ENCODE measurements at regions of chr18 and their contacts with region 1.

Region 1: DNA sequence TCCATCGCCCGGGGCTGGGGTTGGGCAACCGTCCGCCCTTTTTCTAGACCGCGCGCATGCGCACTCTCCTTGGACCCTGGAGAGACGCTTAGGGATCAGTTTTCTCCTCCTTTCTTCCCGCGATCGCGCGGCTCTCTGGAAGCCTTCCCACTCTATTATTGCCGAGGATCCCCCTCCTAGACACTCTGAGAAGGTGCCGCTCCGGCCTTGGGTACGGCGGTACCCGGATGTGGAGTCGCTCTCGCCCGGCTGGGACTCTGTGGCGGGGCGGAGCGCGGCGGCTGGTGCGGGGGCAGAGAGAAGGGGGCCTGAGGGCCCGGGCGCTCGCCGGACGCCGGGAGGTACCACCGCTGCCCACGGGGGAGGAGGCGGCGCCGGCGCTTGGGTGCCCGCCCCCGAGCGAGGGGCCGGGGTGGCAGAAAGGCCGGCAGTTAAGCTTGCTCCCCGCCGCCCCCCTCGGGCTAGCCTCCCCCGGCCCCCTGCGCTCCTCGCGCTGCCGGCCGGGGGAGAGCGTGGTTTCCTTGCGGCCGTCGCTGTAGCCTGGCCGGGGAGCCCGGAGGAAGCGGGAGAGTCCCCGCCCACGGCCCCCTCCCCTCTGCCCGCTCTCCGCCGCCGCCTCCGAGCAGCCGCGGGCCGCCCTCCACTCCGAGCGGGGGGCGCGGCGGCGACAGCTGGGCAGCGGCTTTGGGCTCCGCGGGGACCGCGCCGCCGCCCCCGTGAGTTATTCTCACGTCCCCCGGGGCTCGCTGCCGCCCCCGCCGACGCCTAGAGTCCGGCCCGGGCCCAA is at the start of gene MIB1:
- DNase-seq: peak; percentile 99
- ATAC-seq: peak; percentile 65 to 84 (median 74)
- H3K4me3 ChIP-seq: peak within 1 kb of the TSS; percentile 89
- H3K4me3 Mint-ChIP-seq: peak within 1 kb of the TSS; percentile 97
- H3K27ac ChIP-seq: peak within 1 kb of the TSS; percentile 96
- H3K27ac Mint-ChIP-seq: peak within 1 kb of the TSS; percentile 93 to 95
- H3K4me1 ChIP-seq: peaks cover 11% of the 10 kb centered on the region
- H3K4me1 Mint-ChIP-seq: peaks cover 27 to 30% of the 10 kb centered on the region in 2 donors
- H3K27me3 ChIP-seq: no peaks in the 10 kb centered on the region
- H3K27me3 Mint-ChIP-seq: peaks cover 7 to 10% of the 10 kb centered on the region in 2 donors
- CTCF ChIP-seq: no peak
- total RNA-seq, gene MIB1: 27.5 to 38.4 (median 35.6) TPM

Region 2: GRCh38 chr18:21612125-21612991 is 128.6 kb before region 1 on chr18 and contains the start of gene SNRPD1:
- intact Hi-C with region 1: no loop called
- DNase-seq: peak; percentile 90 to 94
- ATAC-seq: peak; percentile 98 to 100 (median 98)
- H3K4me3 ChIP-seq: peak within 1 kb of the TSS; percentile 58
- H3K4me3 Mint-ChIP-seq: peak within 1 kb of the TSS; percentile 99
- H3K27ac ChIP-seq: peak within 1 kb of the TSS; percentile 70
- H3K27ac Mint-ChIP-seq: peak within 1 kb of the TSS; percentile 96 to 98
- H3K4me1 ChIP-seq: peaks cover 14% of the 10 kb centered on the region
- H3K4me1 Mint-ChIP-seq: peaks cover 18 to 29% of the 10 kb centered on the region in 2 donors
- H3K27me3 ChIP-seq: no peaks in the 10 kb centered on the region
- H3K27me3 Mint-ChIP-seq: no peaks in the 10 kb centered on the region
- CTCF ChIP-seq: peak; percentile 89
- total RNA-seq, gene SNRPD1: 28.0 to 33.8 (median 31.6) TPM

Region 3: DNA sequence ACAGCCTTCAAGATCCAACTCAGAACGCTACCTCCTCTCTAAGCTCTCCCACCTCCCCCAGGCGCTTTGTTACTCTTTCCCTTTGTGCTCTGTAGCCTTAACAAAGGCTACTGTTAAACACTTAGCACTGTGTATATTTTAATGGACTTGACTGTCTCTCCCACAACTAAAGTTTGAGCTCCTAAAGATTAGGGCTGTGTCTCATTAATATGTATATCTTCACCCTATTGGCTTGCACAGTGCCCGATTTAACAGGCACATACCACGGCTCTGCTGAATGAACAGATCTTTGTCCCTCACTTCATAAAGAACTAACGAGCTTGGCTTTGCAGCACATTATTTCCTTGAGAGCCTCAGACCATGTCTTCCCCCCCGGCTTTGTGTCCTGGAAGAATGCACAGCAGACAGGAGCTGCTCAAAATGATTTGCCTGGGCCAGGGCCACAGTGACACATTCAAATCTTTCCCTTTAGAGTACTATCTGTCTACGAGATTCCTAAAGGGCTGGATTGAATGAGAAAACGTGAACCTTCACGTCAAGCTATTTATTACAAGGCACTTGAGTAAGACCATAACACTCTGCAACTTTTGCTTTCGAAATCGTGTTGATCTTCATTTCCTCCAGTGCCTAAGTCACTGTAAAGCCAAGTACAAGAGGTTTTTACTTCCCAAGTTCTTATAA is 58.4 kb before region 1 on chr18:
- intact Hi-C with region 1: loop called (anchors 1 kb)
- DNase-seq: peak; percentile 26 to 76
- ATAC-seq: peak; percentile 82 to 92 (median 91)
- H3K4me3 ChIP-seq: peak overlapping the region; percentile 57
- H3K4me3 Mint-ChIP-seq: no peak overlapping the region
- H3K27ac ChIP-seq: peak overlapping the region; percentile 94
- H3K27ac Mint-ChIP-seq: no peak overlapping the region
- H3K4me1 ChIP-seq: peaks cover 11% of the 10 kb centered on the region
- H3K4me1 Mint-ChIP-seq: peaks cover 0 to 4% of the 10 kb centered on the region in 2 donors
- H3K27me3 ChIP-seq: no peaks in the 10 kb centered on the region
- H3K27me3 Mint-ChIP-seq: no peaks in the 10 kb centered on the region
- CTCF ChIP-seq: no peak